Endothelial cell of umbilical vein (primary cell): ENCODE measurements at regions of chr16 and their contacts with region 1.

Region 1: DNA sequence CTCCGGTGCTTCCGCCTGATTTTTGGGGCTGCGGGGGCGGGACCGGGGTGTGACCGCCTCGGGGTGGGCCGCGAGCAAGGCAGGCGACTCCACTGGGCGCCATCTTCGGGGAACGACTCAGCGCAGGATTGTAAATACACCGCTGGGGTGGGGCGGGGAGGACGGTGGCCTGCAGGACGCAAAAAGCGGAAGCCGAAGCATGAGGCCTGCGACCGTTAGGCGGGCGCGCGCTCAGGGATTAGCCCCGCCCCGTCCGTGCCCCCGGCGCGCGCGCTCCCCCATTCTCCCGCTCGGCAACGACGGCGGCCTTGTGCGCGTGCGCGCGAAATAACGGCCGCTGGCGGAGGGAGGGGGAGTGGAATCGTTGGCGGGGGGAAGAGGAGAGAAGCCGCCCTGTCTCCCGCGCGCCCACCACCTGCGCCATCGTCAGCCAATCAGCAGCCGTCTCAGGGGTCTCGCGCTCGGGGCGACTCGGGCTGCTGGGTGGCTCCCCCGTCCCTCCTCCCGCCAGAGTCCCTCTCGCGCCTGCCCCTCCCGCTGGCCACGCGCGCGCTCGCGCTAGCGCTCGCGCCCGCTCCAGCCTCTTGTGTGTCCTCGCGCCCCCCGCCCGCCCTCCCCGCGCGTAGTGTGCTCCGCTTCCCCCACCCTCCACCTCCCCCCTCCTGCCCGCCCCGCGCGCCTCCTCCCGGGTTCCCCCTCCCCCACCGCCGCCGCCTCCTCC is 791 bp upstream of the MAZ start:
- DNase-seq: peak; percentile 97
- H3K4me3 ChIP-seq: peak overlapping the region; percentile 52 to 61 (median 58)
- H3K27ac ChIP-seq: peak overlapping the region; percentile 68
- H3K4me1 ChIP-seq: peaks cover 30% of the 10 kb centered on the region
- H3K27me3 ChIP-seq: no peaks in the 10 kb centered on the region
- CTCF ChIP-seq: no peak
- POLR2A ChIP-seq: peak; percentile 72

Region 2: DNA sequence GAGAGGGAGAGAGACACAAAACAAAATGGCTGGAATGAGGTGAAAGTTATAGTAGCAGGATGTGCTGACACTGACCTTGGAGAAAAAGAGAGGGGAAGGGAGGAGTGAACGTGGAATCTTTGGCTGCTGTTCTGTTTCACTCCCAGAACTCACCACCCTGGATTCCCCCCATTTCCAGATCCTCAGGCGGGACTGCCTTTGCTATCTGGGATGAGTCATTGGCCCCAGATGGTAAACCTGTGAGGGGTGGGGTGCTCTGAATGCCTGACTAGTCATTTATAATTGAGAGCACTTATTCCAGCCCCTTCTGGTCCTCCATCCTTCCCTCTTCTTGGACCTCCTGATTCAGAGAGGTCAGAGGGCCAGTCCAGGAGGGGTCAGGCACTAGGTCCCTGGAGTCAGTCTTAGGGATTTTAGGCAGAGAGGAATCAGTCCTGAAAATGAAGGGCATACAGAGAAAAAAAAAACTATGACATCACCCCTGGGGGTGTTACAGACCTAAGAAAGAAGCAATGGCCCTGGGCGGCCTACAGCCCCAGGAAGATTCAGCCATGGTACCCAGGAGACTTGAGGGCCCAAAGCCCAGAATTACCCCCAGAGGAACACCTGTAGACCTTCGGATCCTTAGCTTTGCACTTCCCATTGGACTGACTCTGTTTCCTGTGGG is 29.7 kb before region 1 on chr16:
- CTCF ChIA-PET with region 1: no interaction called
- POLR2A ChIA-PET with region 1: no interaction called
- dilution Hi-C with region 1: no loop called
- intact Hi-C with region 1: no loop called
- DNase-seq: no peak
- H3K4me3 ChIP-seq: no peak overlapping the region
- H3K27ac ChIP-seq: no peak overlapping the region
- H3K4me1 ChIP-seq: no peaks in the 10 kb centered on the region
- H3K27me3 ChIP-seq: peaks cover 14% of the 10 kb centered on the region in 2 experiments
- CTCF ChIP-seq: no peak
- POLR2A ChIP-seq: no peak

Region 3: GRCh38 chr16:29825145-29826044 is 19.9 kb after region 1 on chr16:
- CTCF ChIA-PET with region 1: interaction called, 21 read pairs
- POLR2A ChIA-PET with region 1: interaction called, 3 read pairs
- dilution Hi-C with region 1: no loop called
- intact Hi-C with region 1: no loop called
- DNase-seq: peak; percentile 65
- H3K4me3 ChIP-seq: no peak overlapping the region
- H3K27ac ChIP-seq: peak overlapping the region; percentile 73
- H3K4me1 ChIP-seq: peaks cover 47% of the 10 kb centered on the region
- H3K27me3 ChIP-seq: no peaks in the 10 kb centered on the region
- CTCF ChIP-seq: no peak
- POLR2A ChIP-seq: no peak

Region 4: DNA sequence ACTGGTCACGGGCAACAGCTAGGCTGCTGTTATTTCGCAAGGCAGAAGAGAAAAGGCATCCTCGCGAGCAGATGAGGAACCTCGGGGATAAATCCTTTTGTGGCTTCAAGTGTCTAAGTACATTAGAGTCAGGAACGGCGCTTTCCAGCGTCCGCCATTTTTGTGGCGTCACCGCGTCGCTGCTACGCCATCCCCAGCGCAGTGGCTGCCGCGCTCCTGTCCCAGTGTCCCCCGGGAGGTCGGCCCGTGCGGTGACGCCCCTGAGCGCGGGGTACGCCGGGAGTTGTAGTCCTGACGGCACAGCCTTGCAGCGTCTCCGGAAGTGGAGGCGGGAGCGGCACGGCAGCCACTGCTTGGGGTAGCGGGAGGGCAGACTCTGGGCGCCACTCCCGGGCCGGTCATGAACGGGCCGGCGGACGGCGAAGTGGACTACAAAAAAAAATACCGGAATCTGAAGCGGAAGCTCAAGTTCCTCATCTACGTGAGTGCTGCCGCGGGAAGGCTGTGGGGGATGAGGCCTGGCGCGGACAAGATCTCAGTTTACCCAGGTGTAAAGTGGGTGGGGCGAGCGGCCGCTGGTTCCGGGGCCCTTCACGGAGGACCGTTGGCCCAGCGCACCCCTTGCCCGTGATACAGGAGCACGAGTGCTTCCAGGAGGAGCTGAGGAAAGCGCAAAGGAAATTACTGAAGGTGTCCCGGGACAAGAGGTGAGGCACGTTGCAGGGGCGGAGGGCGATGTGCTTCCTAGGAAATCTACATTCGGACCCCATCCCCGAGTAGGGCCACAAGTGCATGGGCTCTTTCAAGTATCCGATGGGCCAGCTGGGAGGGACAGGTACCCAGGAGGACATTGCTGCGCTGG is 190.6 kb after region 1 on chr16 and contains the start of gene INO80E:
- CTCF ChIA-PET with region 1: no interaction called
- POLR2A ChIA-PET with region 1: no interaction called
- dilution Hi-C with region 1: loop called (anchors 10 kb)
- intact Hi-C with region 1: no loop called
- DNase-seq: peak; percentile 95
- H3K4me3 ChIP-seq: peak within 1 kb of the TSS; percentile 70 to 81 (median 73)
- H3K27ac ChIP-seq: peak within 1 kb of the TSS; percentile 76
- H3K4me1 ChIP-seq: peaks cover 22% of the 10 kb centered on the region
- H3K27me3 ChIP-seq: no peaks in the 10 kb centered on the region
- CTCF ChIP-seq: no peak
- POLR2A ChIP-seq: no peak
- total RNA-seq, gene INO80E: 76.4 and 84.1 TPM in 2 replicates

Region 5: DNA sequence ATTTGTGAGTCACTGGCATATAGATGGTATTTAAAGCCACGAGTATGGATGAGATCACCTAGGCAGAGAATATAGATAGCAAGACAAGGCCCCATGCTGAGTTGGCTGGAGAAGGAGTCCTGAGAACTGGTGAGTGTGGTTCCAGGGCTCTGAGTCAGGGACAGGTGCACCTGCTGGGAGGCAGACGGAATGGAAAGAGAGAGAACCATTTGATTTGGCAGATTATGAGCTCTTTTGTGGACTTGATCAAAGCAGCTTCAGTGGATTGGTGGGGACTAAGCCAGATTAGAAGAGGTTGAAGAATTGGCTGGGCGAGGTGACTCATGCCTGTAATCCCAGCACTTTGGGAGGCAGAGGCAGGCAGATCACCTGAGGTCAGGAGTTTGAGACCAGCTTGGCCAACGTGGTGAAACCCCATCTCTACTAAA is 213.2 kb after region 1 on chr16:
- CTCF ChIA-PET with region 1: interaction called, 7 read pairs
- POLR2A ChIA-PET with region 1: no interaction called
- dilution Hi-C with region 1: no loop called
- intact Hi-C with region 1: loop called (anchors 1 kb)
- DNase-seq: no peak
- H3K4me3 ChIP-seq: no peak overlapping the region
- H3K27ac ChIP-seq: no peak overlapping the region
- H3K4me1 ChIP-seq: no peaks in the 10 kb centered on the region
- H3K27me3 ChIP-seq: no peaks in the 10 kb centered on the region
- CTCF ChIP-seq: no peak
- POLR2A ChIP-seq: no peak